ENCODE measurements at regions of chr12 and their contacts with region 1.

Region 1: DNA sequence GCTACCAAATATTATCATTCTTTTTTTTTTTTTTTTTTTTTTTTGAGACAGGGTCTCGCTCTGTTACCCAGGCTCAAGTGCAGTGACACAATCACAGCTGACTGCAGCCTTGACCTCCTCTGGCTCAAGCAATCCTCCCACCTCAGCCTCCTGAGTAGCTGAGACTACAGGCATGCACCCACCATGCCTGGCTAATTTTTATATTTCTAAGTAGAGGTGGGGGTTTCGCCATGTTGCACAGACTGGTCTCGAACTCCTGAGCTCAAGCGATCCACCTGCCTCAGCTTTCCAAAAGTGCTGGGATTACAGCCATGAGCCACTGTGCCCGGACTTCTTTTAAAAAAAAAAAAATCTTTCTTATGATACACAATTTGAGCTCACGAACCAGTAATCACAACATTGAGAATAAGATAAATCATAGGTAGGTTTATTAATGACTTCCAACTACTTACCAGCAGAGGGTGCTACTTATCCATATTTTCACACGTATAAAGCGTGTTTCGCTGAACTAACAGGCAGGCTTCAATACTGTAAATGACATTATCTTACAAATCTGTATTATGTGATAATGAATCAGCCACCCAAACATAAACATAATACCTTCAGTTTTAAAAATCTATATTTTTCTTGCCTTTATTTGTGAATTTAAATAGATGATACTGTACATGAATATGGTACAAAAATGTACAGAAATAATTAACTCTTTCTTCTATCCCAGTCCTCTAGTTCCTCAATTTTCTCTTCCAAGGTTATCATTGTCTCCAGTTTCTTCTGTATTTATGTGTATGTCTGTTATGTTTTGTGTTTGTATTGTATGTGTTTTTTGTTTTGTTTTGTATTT is 42.5 kb upstream of the BCAT1 start:
- DNase-seq: peak; percentile 65
- ATAC-seq: peak; percentile 72
- H3K4me3 ChIP-seq: no peak overlapping the region
- H3K27ac ChIP-seq: no peak overlapping the region
- H3K4me1 ChIP-seq: peaks cover 29% of the 10 kb centered on the region
- H3K27me3 ChIP-seq: no peaks in the 10 kb centered on the region
- CTCF ChIP-seq: peak; percentile 35 to 64 (median 45); a peak in 4 of 6 replicates
- EP300 ChIP-seq: no peak
- POLR2A ChIP-seq: no peak
- RAD21 ChIP-seq: peak; percentile 92

Region 2: DNA sequence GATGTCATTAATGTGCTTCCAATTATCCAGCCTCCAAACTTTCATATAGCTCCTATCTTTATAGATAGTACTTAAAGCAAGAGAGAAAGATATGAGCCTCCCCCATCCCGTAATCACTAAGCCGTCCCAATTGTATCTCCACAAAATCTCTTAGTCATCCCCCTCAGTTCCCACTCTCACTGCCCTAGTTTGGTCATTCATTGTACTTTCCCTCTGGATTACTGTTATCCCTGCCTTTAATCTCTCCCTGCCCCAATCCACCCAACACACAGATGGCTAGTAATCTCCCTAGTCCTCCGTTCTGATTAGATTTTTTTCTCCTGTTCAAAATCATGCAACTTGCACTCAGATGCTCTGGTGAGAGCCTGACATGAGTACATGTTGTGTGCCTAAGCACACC is 37.2 kb before region 1 on chr12:
- CTCF ChIA-PET with region 1: interaction called, 9 read pairs
- POLR2A ChIA-PET with region 1: interaction called, 3 read pairs
- RAD21 ChIA-PET with region 1: interaction called, 60 read pairs
- SMC1A ChIA-PET with region 1: interaction called, 69 read pairs
- in situ Hi-C with region 1: no loop called
- intact Hi-C with region 1: loop called (anchors 2 kb)
- DNase-seq: no peak
- ATAC-seq: no peak
- H3K4me3 ChIP-seq: no peak overlapping the region
- H3K27ac ChIP-seq: peak overlapping the region; percentile 64
- H3K4me1 ChIP-seq: peaks cover 49% of the 10 kb centered on the region
- H3K27me3 ChIP-seq: no peaks in the 10 kb centered on the region
- CTCF ChIP-seq: no peak
- EP300 ChIP-seq: no peak
- POLR2A ChIP-seq: no peak
- RAD21 ChIP-seq: no peak

Region 3: DNA sequence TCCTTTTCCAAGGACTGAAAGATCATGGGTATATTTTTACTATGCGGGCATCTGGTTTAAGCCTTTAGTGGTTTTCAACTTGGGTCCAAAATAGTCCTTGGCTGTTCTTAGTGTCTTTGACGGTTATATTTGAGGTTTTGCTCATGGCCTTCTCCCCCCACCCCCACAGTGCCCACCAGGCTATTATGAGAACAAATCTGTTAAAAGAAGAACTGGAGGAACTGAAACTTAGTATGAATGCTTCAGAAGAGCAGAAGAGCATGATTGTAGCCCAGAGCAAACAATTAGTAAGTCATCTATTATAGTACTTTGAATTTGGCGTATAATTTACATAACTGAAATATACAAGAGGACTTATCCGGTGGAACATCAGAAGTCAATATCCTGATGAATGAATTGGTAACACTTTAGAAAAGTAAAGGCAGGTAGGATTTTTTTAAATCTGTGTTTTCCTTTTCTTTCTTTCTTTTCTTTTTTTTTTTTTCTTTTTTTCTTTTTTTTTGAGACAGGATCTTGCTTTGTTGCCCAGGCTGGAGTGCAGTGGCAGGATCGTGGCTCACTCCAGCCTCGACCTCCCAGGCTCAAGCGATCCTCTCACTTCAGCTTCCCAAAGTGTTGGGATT is 29.3 kb after region 1 on chr12:
- CTCF ChIA-PET with region 1: interaction called, 40 read pairs
- POLR2A ChIA-PET with region 1: interaction called, 50 read pairs
- RAD21 ChIA-PET with region 1: interaction called, 137 read pairs
- SMC1A ChIA-PET with region 1: interaction called, 172 read pairs
- in situ Hi-C with region 1: no loop called
- intact Hi-C with region 1: no loop called
- DNase-seq: peak; percentile 79
- ATAC-seq: peak; percentile 94
- H3K4me3 ChIP-seq: peak overlapping the region; percentile 49; the same call in 1 of the 2 replicates
- H3K27ac ChIP-seq: peak overlapping the region; percentile 76
- H3K4me1 ChIP-seq: peaks cover 35% of the 10 kb centered on the region
- H3K27me3 ChIP-seq: no peaks in the 10 kb centered on the region
- CTCF ChIP-seq: no peak
- EP300 ChIP-seq: peak; percentile 93 to 98
- POLR2A ChIP-seq: no peak
- RAD21 ChIP-seq: no peak; the same call in 1 of the 2 replicates

Region 4: GRCh38 chr12:25083211-25083610 is 91.8 kb after region 1 on chr12:
- CTCF ChIA-PET with region 1: interaction called, 9 read pairs
- POLR2A ChIA-PET with region 1: no interaction called
- RAD21 ChIA-PET with region 1: interaction called, 3 read pairs
- SMC1A ChIA-PET with region 1: interaction called, 14 read pairs
- in situ Hi-C with region 1: no loop called
- intact Hi-C with region 1: no loop called
- DNase-seq: no peak
- ATAC-seq: no peak
- H3K4me3 ChIP-seq: no peak overlapping the region
- H3K27ac ChIP-seq: no peak overlapping the region
- H3K4me1 ChIP-seq: no peaks in the 10 kb centered on the region
- H3K27me3 ChIP-seq: no peaks in the 10 kb centered on the region
- CTCF ChIP-seq: no peak
- EP300 ChIP-seq: no peak
- POLR2A ChIP-seq: no peak
- RAD21 ChIP-seq: no peak

Region 5: DNA sequence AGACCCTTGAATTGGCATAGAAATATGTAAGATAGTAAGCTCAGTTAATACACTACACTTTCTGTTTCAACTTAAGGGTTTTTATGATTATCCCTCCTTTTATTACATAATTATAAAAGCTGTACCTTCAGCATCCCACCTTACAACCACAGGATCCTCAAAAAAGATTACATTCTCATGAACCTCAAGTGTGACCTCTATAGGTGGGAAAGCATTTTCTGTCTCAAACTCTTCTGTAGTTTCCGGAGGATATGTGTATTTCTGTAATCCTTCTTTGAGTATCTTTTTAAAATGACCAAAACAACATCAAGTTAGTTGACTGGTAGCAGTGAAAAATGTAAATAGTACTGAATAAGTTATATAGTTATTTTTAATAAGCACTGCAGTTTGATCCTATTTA is 127.6 kb after region 1 on chr12:
- CTCF ChIA-PET with region 1: interaction called, 161 read pairs
- POLR2A ChIA-PET with region 1: interaction called, 3 read pairs
- RAD21 ChIA-PET with region 1: interaction called, 34 read pairs
- SMC1A ChIA-PET with region 1: interaction called, 31 read pairs
- in situ Hi-C with region 1: loop called (anchors 5 kb)
- intact Hi-C with region 1: no loop called
- DNase-seq: no peak
- ATAC-seq: peak; percentile 60
- H3K4me3 ChIP-seq: no peak overlapping the region
- H3K27ac ChIP-seq: no peak overlapping the region
- H3K4me1 ChIP-seq: no peaks in the 10 kb centered on the region
- H3K27me3 ChIP-seq: no peaks in the 10 kb centered on the region
- CTCF ChIP-seq: peak; percentile 25 to 46 (median 25); a peak in 4 of 6 replicates
- EP300 ChIP-seq: no peak
- POLR2A ChIP-seq: no peak
- RAD21 ChIP-seq: peak; percentile 54

Region 6: GRCh38 chr12:25386831-25387731 is 395.7 kb after region 1 on chr12:
- CTCF ChIA-PET with region 1: no interaction called
- POLR2A ChIA-PET with region 1: interaction called, 3 read pairs
- RAD21 ChIA-PET with region 1: interaction called, 3 read pairs
- SMC1A ChIA-PET with region 1: interaction called, 18 read pairs
- in situ Hi-C with region 1: no loop called
- intact Hi-C with region 1: no loop called
- DNase-seq: no peak
- ATAC-seq: peak; percentile 65
- H3K4me3 ChIP-seq: peak overlapping the region; percentile 99; the same call in 1 of the 2 replicates
- H3K27ac ChIP-seq: peak overlapping the region; percentile 95
- H3K4me1 ChIP-seq: peaks cover 21% of the 10 kb centered on the region
- H3K27me3 ChIP-seq: no peaks in the 10 kb centered on the region
- CTCF ChIP-seq: peak; percentile 76 to 92 (median 78)
- EP300 ChIP-seq: no peak
- POLR2A ChIP-seq: no peak
- RAD21 ChIP-seq: peak; percentile 96

Measured in GM12878 (cell line).